ENCODE measurements at regions of chr12 and their contacts with region 1.

Region 1: DNA sequence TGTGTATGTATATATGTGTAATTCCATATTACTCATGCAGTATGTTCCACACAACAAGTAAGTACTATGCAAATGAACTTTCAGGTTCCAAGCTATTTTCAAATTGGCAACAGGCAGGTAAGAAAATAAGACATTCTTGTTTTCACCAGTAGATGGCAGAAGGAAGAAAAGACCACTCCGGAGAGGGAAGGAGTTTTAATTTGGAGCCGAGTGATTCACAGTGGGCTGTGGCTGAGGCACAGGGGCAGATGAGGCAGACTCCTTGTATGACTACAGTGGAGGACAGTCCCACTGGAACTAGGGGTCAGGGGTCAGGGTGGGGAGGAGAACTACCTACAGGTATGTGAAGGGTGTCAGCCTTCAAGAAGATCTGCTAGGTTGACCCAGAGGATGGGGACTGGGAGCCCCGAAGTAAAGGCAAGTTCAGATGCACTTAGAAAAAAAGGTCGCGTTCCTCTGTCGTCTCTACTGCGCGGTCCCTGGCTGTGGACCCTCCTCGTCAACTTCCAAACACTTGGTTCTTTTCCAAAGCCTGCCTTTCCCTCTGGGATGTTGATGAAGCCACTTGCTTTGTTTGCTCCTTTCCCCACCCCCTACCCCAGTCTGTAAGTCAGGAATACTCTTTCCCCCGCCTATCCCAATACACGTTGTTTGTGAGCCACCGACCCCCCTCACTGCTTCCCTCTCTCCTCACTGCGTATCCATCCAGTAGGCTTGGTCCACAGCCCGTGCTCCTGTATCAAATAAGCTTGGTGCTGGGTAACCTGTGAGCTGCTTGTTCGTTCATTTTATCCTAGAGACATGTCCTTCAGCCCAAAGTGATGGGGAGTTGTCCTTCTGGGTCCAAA is 24.1 kb downstream of the DDX47 start:
- DNase-seq: peak; percentile 74 to 85
- H3K4me3 ChIP-seq: no peak overlapping the region
- H3K27ac ChIP-seq: peak overlapping the region; percentile 99
- H3K4me1 ChIP-seq: peaks cover 97% of the 10 kb centered on the region
- H3K27me3 ChIP-seq: no peaks in the 10 kb centered on the region
- CTCF ChIP-seq: peak; percentile 80

Region 2: DNA sequence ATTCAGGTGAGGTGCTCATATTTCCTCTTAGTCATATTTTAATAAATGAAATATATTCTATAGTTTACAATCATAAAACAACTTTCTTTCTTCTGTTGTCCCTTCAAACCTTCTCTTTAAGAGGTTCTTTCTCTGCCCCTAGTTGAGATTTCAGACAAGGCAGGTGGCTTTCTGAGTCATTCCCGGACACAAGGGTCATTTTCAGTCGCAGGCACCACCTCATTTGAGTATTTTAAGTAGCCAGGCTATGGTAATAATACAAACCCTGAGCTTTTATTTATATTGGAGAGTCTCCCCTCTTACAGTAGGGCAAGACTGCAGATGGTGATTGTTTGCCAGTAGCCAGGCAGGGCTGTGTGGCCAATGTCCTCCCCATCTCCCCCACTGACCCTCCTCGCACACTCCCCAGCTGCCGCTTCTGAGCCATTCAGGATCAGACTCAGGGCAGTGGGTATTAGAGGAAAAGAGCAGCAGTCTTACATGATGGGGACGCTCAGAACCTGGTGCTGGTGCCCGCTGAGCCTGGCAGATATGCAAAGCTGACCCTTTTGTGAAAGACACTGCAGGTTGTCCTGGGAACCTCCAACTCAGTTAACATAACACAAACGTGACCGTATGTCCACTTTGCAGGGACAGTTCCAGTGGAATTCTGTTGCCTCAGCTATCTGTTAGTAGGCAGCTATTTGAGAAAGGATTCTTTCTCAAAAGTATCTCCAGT is 867.7 kb before region 1 on chr12:
- CTCF ChIA-PET with region 1: no interaction called
- POLR2A ChIA-PET with region 1: no interaction called
- intact Hi-C with region 1: no loop called
- DNase-seq: no peak
- H3K4me3 ChIP-seq: no peak overlapping the region
- H3K27ac ChIP-seq: no peak overlapping the region
- H3K4me1 ChIP-seq: 0 out of 2 replicates have a peak, but pooled peaks cover 5% of the 10 kb centered on the region
- H3K27me3 ChIP-seq: no peaks in the 10 kb centered on the region
- CTCF ChIP-seq: no peak

Region 3: DNA sequence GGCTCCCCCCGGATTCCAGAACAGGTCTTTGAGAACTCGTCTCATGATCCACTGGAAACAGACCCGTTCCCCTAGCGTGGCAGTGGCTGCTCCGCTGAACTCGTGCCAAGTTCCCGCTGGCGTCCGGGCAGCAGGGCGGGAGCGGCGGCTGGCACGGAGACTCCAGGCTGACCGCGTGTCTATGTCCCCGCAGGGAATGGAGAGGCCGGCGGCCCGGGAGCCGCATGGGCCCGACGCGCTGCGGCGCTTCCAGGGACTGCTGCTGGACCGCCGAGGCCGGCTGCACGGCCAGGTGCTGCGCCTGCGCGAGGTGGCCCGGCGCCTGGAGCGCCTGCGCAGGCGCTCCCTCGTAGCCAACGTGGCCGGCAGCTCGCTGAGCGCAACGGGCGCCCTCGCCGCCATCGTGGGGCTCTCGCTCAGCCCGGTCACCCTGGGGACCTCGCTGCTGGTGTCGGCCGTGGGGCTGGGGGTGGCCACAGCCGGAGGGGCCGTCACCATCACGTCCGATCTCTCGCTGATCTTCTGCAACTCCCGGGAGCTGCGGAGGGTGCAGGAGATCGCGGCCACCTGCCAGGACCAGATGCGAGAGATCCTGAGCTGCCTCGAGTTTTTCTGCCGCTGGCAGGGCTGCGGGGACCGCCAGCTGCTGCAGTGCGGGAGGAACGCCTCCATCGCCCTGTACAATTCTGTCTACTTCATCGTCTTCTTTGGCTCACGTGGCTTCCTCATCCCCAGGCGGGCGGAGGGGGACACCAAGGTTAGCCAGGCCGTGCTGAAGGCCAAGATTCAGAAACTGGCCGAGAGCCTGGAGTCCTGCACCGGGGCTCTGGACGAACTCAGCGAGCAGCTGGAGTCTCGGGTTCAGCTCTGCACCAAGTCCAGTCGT is 50.3 kb before region 1 on chr12:
- CTCF ChIA-PET with region 1: interaction called, 6 read pairs
- POLR2A ChIA-PET with region 1: interaction called, 4 read pairs
- intact Hi-C with region 1: loop called (anchors 1 kb)
- DNase-seq: peak; percentile 57 to 83
- H3K4me3 ChIP-seq: peak overlapping the region; percentile 61; the same call in 1 of the 2 replicates
- H3K27ac ChIP-seq: peak overlapping the region; percentile 76
- H3K4me1 ChIP-seq: peaks cover 44% of the 10 kb centered on the region
- H3K27me3 ChIP-seq: no peaks in the 10 kb centered on the region
- CTCF ChIP-seq: no peak

Region 4: GRCh38 chr12:12819671-12820311 is 17.5 kb before region 1 on chr12:
- CTCF ChIA-PET with region 1: interaction called, 8 read pairs
- POLR2A ChIA-PET with region 1: interaction called, 8 read pairs
- intact Hi-C with region 1: loop called (anchors 1 kb)
- DNase-seq: peak; percentile 86 to 99
- H3K4me3 ChIP-seq: peak overlapping the region; percentile 29
- H3K27ac ChIP-seq: peak overlapping the region; percentile 94
- H3K4me1 ChIP-seq: peaks cover 100% of the 10 kb centered on the region
- H3K27me3 ChIP-seq: no peaks in the 10 kb centered on the region
- CTCF ChIP-seq: no peak

Region 5: GRCh38 chr12:12883369-12884001 is 46.2 kb after region 1 on chr12:
- CTCF ChIA-PET with region 1: interaction called, 13 read pairs
- POLR2A ChIA-PET with region 1: interaction called, 27 read pairs
- intact Hi-C with region 1: loop called (anchors 1 kb)
- DNase-seq: peak; percentile 74 to 99
- H3K4me3 ChIP-seq: peak overlapping the region; percentile 55; the same call in 1 of the 2 replicates
- H3K27ac ChIP-seq: peak overlapping the region; percentile 96
- H3K4me1 ChIP-seq: peaks cover 79% of the 10 kb centered on the region
- H3K27me3 ChIP-seq: no peaks in the 10 kb centered on the region
- CTCF ChIP-seq: no peak

Region 6: DNA sequence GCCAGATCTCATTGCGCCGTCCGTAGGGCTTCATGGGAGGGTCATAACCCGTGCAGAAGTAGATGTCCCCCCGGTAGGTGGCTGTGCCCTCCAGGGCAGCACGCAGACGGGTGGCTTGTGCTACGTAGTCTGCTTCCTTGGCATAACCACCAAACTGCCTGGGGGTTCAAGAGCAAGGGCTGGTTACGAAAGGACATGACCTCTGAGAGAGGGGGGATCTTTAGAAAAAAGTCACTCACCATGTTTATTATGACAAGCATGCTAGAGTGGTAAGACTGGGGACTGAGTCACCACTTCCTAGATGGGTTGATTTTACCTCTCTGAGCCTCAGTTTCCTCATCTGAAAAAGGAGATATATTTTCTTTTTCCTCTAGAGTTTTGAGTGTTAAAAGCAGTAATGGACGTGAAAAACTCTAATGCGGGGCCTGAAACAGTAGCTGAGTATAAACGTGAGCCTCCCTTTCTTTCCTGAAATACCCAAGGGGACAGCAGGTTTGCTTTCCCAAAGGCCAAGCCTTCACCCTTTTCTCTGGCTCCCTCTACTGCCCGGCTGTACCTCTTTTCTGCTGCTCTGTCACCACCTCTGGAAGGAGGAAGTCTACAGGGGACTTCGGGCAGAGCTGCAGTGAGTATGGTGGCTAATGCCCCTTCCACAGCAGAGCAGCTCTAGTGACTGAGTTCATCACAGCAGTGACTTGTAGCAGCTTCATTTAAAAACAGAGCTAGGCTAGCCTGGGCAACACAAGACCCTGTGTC is 138.3 kb after region 1 on chr12:
- CTCF ChIA-PET with region 1: interaction called, 10 read pairs
- POLR2A ChIA-PET with region 1: no interaction called
- intact Hi-C with region 1: loop called (anchors 1 kb)
- DNase-seq: peak in 1 of 2 experiments; percentile 66
- H3K4me3 ChIP-seq: no peak overlapping the region
- H3K27ac ChIP-seq: peak overlapping the region; percentile 66
- H3K4me1 ChIP-seq: peaks cover 36% of the 10 kb centered on the region
- H3K27me3 ChIP-seq: no peaks in the 10 kb centered on the region
- CTCF ChIP-seq: peak; percentile 48

Measured in PC-9 (cell line).